ENCODE measurements at regions of chr7 and their contacts with region 1.

Region 1: GRCh38 chr7:139109188-139109982 is at the start of gene ZC3HAV1:
- DNase-seq: peak; percentile 60 to 92
- H3K4me3 ChIP-seq: peak within 1 kb of the TSS; percentile 98 to 100
- H3K27ac ChIP-seq: peak within 1 kb of the TSS; percentile 97 to 98
- H3K4me1 ChIP-seq: peaks cover 0 to 4% of the 10 kb centered on the region in 2 donors
- H3K27me3 ChIP-seq: no peaks in the 10 kb centered on the region
- CTCF ChIP-seq: no peak
- total RNA-seq, gene ZC3HAV1: 25.0 TPM

Region 2: GRCh38 chr7:138962550-138963241 is 146.7 kb before region 1 on chr7:
- intact Hi-C with region 1: no loop called
- DNase-seq: no peak
- H3K4me3 ChIP-seq: no peak overlapping the region
- H3K27ac ChIP-seq: no peak overlapping the region
- H3K4me1 ChIP-seq: no peaks in the 10 kb centered on the region
- H3K27me3 ChIP-seq: no peaks in the 10 kb centered on the region
- CTCF ChIP-seq: no peak

Region 3: DNA sequence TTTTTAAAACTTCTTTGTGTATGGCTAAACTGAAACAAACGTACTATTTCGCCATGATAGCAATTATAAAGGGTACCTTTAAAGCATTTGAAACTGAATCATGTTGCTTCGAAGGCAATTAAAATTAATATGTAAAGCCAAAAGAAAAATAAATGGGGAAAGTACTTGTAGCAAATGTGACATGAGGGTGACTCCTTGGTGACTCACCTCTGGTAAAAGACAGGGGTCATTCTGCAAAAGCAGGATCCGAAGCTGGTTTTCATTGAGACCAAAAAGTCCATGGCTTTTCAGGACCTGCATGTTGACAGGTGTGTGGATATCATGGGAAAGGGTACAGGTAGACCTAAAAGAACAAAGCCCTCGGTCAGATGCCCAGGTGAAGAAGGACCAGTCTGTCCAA is 75.0 kb before region 1 on chr7:
- intact Hi-C with region 1: no loop called
- DNase-seq: no peak
- H3K4me3 ChIP-seq: peak overlapping the region in 1 of 2 donors; percentile 94
- H3K27ac ChIP-seq: no peak overlapping the region
- H3K4me1 ChIP-seq: peaks cover 0 to 9% of the 10 kb centered on the region in 2 donors
- H3K27me3 ChIP-seq: no peaks in the 10 kb centered on the region
- CTCF ChIP-seq: no peak

Region 4: GRCh38 chr7:139133335-139134139 is 24.2 kb after region 1 on chr7:
- intact Hi-C with region 1: loop called (anchors 1 kb)
- DNase-seq: peak; percentile 48 to 93
- H3K4me3 ChIP-seq: peak overlapping the region; percentile 62 to 63
- H3K27ac ChIP-seq: peak overlapping the region; percentile 6 to 58
- H3K4me1 ChIP-seq: peaks cover 2 to 5% of the 10 kb centered on the region in 2 donors
- H3K27me3 ChIP-seq: no peaks in the 10 kb centered on the region
- CTCF ChIP-seq: no peak

Region 5: GRCh38 chr7:139192014-139192706 is 82.8 kb after region 1 on chr7:
- intact Hi-C with region 1: no loop called
- DNase-seq: no peak
- H3K4me3 ChIP-seq: no peak overlapping the region
- H3K27ac ChIP-seq: no peak overlapping the region
- H3K4me1 ChIP-seq: no peaks in the 10 kb centered on the region
- H3K27me3 ChIP-seq: no peaks in the 10 kb centered on the region
- CTCF ChIP-seq: no peak

Measured in ascending aorta (tissue), 2 donors.